IMR-90 (cell line): ENCODE measurements at regions of chr4 and their contacts with region 1.

Region 1: DNA sequence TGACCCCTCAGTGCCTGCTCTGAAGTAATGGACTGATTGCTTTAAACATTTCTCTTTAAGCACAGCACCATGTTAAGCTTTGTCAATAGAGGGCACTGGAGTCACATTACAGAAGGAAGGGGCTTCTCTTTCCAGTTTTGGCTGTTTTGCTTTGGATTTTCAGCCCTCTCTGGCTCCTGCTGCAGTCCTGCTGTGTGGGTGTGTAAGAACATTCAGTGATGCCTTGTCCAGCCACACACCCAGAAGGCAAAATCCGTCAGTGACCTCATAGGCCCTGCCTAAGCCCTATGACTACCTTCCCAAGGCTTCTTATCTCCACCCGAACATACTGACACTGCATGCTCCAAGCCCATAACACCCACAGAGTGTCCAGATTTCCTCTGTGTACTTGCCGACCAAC is 215.3 kb upstream of the CTSO start:
- DNase-seq: peak; percentile 95
- ATAC-seq: peak; percentile 97
- H3K4me3 ChIP-seq: no peak overlapping the region
- H3K27ac ChIP-seq: no peak overlapping the region
- H3K4me1 ChIP-seq: peaks cover 5% of the 10 kb centered on the region
- H3K27me3 ChIP-seq: no peaks in the 10 kb centered on the region
- CTCF ChIP-seq: peak; percentile 75
- POLR2A ChIP-seq: no peak
- RAD21 ChIP-seq: peak; percentile 84

Region 2: DNA sequence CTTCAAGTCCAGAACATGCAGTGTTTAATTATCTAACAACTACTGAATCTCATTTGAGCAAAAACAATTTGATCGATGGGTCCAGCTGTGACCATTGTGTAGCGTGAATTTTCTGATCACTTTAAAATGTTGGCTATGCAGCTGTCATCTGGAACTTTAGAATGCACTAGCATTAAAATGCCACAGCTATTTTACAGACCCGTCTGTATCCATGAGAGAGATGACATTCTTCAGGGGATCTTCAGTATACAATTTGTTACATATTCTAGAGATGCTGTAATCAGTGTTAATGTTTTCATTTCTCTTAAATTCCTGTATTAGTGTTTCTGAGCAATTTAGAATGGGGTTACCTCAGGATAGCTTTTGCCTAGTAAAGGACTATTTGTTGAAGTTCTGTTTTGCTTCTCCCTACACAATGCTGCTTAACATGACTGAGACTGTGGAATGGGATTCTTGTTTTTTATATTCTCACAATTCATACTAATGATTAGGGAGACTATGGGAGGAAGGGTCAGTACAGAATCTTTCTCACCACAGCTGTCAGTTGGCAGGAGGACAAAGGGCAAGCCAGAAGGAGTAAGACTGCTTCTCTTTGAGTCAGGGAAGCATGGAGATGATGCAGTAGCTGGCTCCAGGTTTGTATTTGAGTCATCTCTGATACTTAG is 202.1 kb before region 1 on chr4:
- CTCF ChIA-PET with region 1: no interaction called
- POLR2A ChIA-PET with region 1: no interaction called
- dilution Hi-C with region 1: no loop called
- in situ Hi-C with region 1: no loop called
- intact Hi-C with region 1: loop called (anchors 5 kb)
- DNase-seq: peak; percentile 69
- ATAC-seq: peak; percentile 84
- H3K4me3 ChIP-seq: no peak overlapping the region
- H3K27ac ChIP-seq: peak overlapping the region; percentile 97; the same call in 1 of the 2 replicates
- H3K4me1 ChIP-seq: peaks cover 3% of the 10 kb centered on the region; the same call in 1 of the 2 replicates
- H3K27me3 ChIP-seq: no peaks in the 10 kb centered on the region
- CTCF ChIP-seq: no peak
- POLR2A ChIP-seq: no peak
- RAD21 ChIP-seq: no peak

Region 3: GRCh38 chr4:156118507-156119220 is 50.3 kb before region 1 on chr4:
- CTCF ChIA-PET with region 1: no interaction called
- POLR2A ChIA-PET with region 1: no interaction called
- dilution Hi-C with region 1: no loop called
- in situ Hi-C with region 1: no loop called
- intact Hi-C with region 1: no loop called
- DNase-seq: peak; percentile 13
- ATAC-seq: no peak
- H3K4me3 ChIP-seq: no peak overlapping the region
- H3K27ac ChIP-seq: no peak overlapping the region
- H3K4me1 ChIP-seq: peaks cover 5% of the 10 kb centered on the region; the same call in 1 of the 2 replicates
- H3K27me3 ChIP-seq: no peaks in the 10 kb centered on the region
- CTCF ChIP-seq: no peak
- POLR2A ChIP-seq: no peak
- RAD21 ChIP-seq: no peak

Region 4: GRCh38 chr4:156242389-156242788 is 73.4 kb after region 1 on chr4:
- CTCF ChIA-PET with region 1: no interaction called
- POLR2A ChIA-PET with region 1: no interaction called
- dilution Hi-C with region 1: no loop called
- in situ Hi-C with region 1: no loop called
- intact Hi-C with region 1: no loop called
- DNase-seq: no peak
- ATAC-seq: no peak
- H3K4me3 ChIP-seq: no peak overlapping the region
- H3K27ac ChIP-seq: no peak overlapping the region
- H3K4me1 ChIP-seq: no peaks in the 10 kb centered on the region
- H3K27me3 ChIP-seq: no peaks in the 10 kb centered on the region
- CTCF ChIP-seq: no peak
- POLR2A ChIP-seq: no peak
- RAD21 ChIP-seq: no peak

Region 5: DNA sequence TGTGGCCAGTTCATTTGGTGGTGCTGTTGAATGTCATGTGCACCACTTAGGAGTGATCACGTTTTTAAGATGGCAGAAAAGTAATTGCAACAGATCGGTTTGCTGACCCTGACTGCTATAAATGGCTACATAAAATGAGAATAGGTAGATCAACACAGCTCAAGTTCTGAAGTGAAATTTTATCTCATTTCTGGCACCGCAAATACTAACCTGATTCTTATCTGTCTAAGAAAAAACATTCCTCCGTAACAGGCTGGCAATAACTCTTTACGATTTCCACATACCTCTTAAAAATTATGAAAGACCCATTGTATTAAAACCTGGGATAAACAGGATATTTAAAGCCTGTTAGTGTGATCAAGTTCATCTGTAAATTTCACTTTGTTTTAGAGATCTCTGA is 415.1 kb after region 1 on chr4:
- CTCF ChIA-PET with region 1: no interaction called
- POLR2A ChIA-PET with region 1: no interaction called
- dilution Hi-C with region 1: no loop called
- in situ Hi-C with region 1: no loop called
- intact Hi-C with region 1: loop called (anchors 10 kb)
- DNase-seq: no peak
- ATAC-seq: no peak
- H3K4me3 ChIP-seq: no peak overlapping the region
- H3K27ac ChIP-seq: no peak overlapping the region
- H3K4me1 ChIP-seq: no peaks in the 10 kb centered on the region
- H3K27me3 ChIP-seq: no peaks in the 10 kb centered on the region
- CTCF ChIP-seq: no peak
- POLR2A ChIP-seq: no peak
- RAD21 ChIP-seq: no peak

Region 6: DNA sequence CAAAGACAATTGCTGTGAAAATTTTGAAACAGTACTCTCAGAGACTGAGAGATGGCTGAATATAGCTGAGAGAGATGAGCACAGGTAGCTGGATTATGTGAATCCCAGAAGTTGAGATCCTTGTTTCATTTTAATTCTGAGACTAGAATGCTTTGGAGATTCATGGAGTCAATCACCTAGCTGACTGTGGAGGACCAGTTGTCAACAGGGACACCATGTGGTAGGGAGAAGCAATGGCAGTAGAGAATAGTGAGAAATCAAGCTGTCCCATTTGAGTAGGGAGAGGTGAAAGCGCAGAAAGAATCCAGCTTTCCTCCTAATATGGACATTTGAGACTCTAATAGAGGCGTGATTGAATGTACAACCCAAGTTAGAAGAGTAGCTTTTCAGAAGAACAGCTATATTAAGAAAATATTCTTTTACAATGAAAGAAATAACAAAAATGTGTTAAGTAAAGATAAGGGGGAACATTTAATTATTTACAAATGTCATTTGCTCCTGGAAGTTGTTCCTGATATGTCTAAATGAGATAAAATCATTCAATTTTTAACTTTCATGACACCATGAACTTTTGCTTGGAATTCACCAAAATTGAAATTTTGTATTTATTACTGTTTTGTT is 876.6 kb after region 1 on chr4:
- CTCF ChIA-PET with region 1: no interaction called
- POLR2A ChIA-PET with region 1: no interaction called
- dilution Hi-C with region 1: no loop called
- in situ Hi-C with region 1: loop called (anchors 25 kb)
- intact Hi-C with region 1: loop called (anchors 2 kb)
- DNase-seq: peak; percentile 80
- ATAC-seq: peak; percentile 96
- H3K4me3 ChIP-seq: no peak overlapping the region
- H3K27ac ChIP-seq: no peak overlapping the region
- H3K4me1 ChIP-seq: 0 out of 2 replicates have a peak, but pooled peaks cover 3% of the 10 kb centered on the region
- H3K27me3 ChIP-seq: no peaks in the 10 kb centered on the region
- CTCF ChIP-seq: peak; percentile 90
- POLR2A ChIP-seq: no peak
- RAD21 ChIP-seq: peak; percentile 94

Region 7: GRCh38 chr4:157204634-157205244 is 1035.7 kb after region 1 on chr4:
- CTCF ChIA-PET with region 1: no interaction called
- POLR2A ChIA-PET with region 1: no interaction called
- dilution Hi-C with region 1: no loop called
- in situ Hi-C with region 1: no loop called
- intact Hi-C with region 1: loop called (anchors 5 kb)
- DNase-seq: peak; percentile 1
- ATAC-seq: no peak
- H3K4me3 ChIP-seq: no peak overlapping the region
- H3K27ac ChIP-seq: no peak overlapping the region
- H3K4me1 ChIP-seq: no peaks in the 10 kb centered on the region
- H3K27me3 ChIP-seq: no peaks in the 10 kb centered on the region
- CTCF ChIP-seq: peak; percentile 36; the same call in 1 of the 2 replicates
- POLR2A ChIP-seq: no peak
- RAD21 ChIP-seq: peak; percentile 42; the same call in 1 of the 2 replicates